Tibial artery (tissue), 4 donors: ENCODE measurements at regions of chr12 and their contacts with region 1.

Region 1: GRCh38 chr12:120686690-120687577 is at the start of gene MLEC:
- DNase-seq: peak; percentile 98 to 99
- H3K4me3 ChIP-seq: peak within 1 kb of the TSS; percentile 78 to 87
- H3K27ac ChIP-seq: peak within 1 kb of the TSS; percentile 91 to 92
- H3K4me1 ChIP-seq: peaks cover 0 to 38% (median 28%) of the 10 kb centered on the region in 4 donors
- H3K27me3 ChIP-seq: no peaks in the 10 kb centered on the region
- CTCF ChIP-seq: no peak

Region 2: DNA sequence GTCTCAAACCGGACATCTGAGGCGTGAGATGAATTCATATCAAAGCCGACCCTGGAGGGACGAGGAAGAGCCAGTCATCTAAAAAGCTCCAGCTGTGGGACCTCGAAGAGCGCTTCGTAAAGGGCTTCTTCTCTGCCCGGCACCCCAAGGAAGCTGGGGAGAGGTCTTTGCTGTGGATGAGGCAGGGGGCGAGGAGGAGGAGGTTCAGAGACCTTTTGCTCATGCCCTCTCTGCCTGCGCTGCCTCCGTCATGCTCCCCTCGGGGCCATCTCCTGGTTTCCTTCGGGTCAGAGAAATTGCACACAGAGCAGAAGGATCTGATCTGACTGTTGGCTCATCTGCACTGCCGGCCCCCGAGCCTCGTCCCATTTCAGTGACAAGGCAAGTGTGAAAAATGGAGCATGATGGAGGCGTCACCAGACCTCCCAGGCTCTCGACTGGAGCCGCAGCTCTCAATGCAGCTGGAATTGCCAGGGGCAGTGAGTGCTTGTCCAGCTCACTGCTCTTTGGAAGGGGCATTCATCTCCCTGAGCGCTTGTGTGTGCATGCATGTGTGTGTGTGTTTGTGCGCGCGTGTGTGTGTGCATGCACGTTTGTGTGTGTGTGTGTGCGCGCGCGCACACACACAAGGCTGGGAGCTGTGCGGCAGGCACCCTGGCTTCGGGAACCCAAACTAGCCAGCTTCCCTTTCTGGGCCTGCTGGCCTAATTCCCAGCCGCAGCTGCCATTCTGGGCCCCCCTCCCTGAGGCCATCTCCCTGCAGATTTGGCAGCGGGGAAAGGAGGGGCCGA is 37.3 kb before region 1 on chr12:
- intact Hi-C with region 1: loop called (anchors 5 kb)
- DNase-seq: peak in 1 of 2 donors; percentile 78
- H3K4me3 ChIP-seq: peak overlapping the region; percentile 42 to 57
- H3K27ac ChIP-seq: peak overlapping the region; percentile 88 to 92
- H3K4me1 ChIP-seq: peaks cover 0 to 58% (median 42%) of the 10 kb centered on the region in 4 donors
- H3K27me3 ChIP-seq: peaks cover 0 to 17% of the 10 kb centered on the region in 2 donors
- CTCF ChIP-seq: no peak